Astrocyte of the cerebellum (primary cell): ENCODE measurements at regions of chr14 and their contacts with region 1.

Region 1: DNA sequence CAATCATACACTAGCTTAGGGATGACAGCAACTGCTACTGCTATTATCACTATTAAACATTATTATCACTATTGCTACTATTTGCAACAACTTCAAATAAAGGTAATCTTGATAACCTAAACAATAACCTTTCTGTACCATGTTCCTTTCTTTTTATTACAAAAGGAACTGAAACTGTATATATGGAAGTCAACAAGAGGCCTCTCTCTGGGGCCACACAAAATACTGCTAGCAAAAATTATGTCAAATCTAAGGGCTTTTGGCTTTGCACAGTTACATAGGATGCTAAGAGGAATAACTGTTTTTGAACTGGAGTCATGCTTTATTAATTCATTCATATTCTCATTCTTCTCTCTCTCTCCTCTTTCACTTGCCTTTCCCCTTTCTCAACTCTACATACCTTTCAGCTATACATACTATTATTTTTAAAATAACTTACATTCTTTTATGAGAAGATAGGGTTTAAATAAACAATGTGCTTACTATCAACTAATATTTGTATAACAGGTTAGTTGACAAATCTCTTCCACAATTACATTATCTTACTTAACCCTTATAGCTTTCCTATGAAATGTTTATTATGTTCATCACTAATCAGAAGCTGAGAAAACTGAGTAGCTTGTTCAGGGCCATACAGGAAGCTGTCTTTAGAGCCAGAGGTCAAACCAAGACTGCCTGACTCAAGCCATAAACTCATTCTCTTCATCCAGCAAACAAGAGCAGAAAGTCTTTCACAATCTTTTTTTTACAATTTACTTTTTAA is 25.7 kb downstream of the SPTSSA start:
- DNase-seq: no peak
- H3K4me3 ChIP-seq: no peak overlapping the region
- CTCF ChIP-seq: no peak

Region 2: GRCh38 chr14:33642691-33643244 is 793.5 kb before region 1 on chr14:
- in situ Hi-C with region 1: no loop called
- DNase-seq: peak; percentile 44
- H3K4me3 ChIP-seq: no peak overlapping the region
- CTCF ChIP-seq: no peak

Region 3: DNA sequence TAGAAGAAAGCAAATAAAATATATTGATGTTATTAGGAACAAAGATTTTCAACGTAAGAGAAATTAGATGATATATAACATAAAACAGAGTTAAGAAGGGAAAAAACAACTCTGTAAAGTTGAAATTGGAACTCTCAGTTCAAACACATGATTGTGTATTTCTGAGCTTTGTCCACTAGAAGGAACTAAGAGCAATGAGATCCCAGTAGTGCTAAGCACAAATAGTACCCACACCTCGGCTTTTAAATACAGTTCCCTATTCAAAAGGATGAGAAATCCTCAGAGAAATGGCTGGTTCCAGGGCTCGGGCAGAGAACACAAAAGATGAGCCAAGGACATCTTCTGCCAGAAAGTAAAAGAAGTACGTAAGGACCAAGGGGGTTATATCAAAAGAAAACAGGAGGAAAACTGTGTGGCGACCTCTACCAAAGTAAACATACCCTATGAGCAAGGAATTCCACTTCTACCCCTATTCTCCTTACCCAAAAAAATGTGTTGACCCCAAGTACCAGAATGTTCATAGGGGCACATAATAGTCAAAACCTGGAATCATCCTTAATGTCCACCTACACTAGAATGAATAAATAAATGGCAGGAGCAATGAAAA is 70.9 kb before region 1 on chr14:
- in situ Hi-C with region 1: loop called (anchors 5 kb)
- DNase-seq: no peak
- H3K4me3 ChIP-seq: no peak overlapping the region
- CTCF ChIP-seq: peak; percentile 42

Region 4: GRCh38 chr14:34582117-34582680 is 145.9 kb after region 1 on chr14:
- in situ Hi-C with region 1: no loop called
- DNase-seq: no peak
- H3K4me3 ChIP-seq: no peak overlapping the region
- CTCF ChIP-seq: no peak